Activated T-helper 1 cell treated with anti-CD3 and anti-CD28 coated beads, Interleukin-12 subunit alpha, Interleukin-12 subunit beta, Interleukin-2, Interleukin-4 antibody, amounts not matched to agents 30 ng/mL and 10 ng/mL and 1 ng/mL, durations not matched to agents 14 hours and 24 hours and 36 hours (primary cell): ENCODE measurements at regions of chr4 and their contacts with region 1.

Region 1: GRCh38 chr4:140153718-140154571 is at the start of gene MAML3:
- DNase-seq: peak; percentile 76
- H3K4me3 Mint-ChIP-seq: peak within 1 kb of the TSS; percentile 86
- H3K27ac Mint-ChIP-seq: peak within 1 kb of the TSS; percentile 63
- H3K4me1 Mint-ChIP-seq: peaks cover 57% of the 10 kb centered on the region
- H3K27me3 Mint-ChIP-seq: peaks cover 69% of the 10 kb centered on the region
- total RNA-seq, gene MAML3: 0.32 and 0.47 TPM in 2 replicates

Region 2: DNA sequence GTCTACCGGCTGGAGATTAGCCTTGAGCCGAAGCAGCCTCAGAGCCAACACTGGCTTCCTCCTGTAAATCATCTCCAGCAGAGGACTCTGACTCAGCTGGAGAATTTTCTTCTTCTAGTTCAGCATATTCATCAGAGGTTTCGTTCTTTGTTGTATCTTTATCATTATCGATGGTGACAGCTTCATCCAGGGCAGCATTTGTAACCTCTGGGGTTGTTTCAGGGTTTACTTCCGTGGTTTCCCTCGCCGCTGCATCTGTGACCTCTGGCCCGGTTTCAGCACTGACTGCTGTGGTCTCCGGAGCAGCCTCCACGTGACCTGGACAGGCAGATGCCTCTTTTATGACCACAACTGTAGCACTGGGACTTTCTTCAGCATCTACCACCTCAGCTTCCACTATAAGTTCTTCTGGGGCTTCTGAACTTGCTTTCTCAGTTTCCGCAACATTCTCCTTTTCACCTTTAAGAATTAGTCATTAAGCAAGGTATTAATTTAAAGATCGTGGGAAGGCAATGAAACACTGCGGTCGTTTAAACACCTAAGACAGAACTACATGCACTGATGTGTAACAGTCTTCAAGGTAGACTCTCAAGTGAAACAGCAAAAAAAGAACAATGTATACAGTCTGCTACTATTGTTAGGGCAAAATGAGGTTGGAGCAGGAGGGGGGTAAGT is 887.2 kb before region 1 on chr4:
- intact Hi-C with region 1: loop called (anchors 10 kb)
- DNase-seq: peak; percentile 70
- H3K4me3 Mint-ChIP-seq: peak overlapping the region; percentile 50
- H3K27ac Mint-ChIP-seq: peak overlapping the region; percentile 10
- H3K4me1 Mint-ChIP-seq: peaks cover 21% of the 10 kb centered on the region
- H3K27me3 Mint-ChIP-seq: peaks cover 23% of the 10 kb centered on the region

Region 3: DNA sequence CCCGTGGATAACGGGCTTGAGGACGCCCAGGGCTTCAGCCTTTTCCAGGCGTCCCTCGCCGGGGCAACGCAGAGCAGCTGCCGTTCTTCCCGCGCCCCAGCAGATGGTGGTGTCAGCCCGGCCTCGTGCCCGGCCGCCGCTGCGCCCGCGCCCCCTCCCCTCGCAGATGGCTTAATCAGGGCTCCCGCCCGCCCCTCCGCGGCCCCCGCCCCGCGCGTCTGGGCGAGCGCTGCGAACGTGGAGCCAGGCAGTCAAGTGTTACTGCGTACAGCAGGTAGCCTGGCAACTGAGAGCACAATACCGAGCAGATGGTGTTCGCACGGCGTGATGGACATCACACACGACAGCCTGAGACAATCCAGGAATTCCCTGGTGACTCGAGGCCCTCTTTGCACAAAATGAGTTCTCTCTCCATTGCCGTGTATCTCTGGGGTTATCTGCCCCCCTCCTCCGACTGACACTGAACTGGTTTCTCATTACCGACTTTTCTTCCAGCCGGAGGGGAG is 419.0 kb before region 1 on chr4:
- intact Hi-C with region 1: loop called (anchors 5 kb)
- DNase-seq: peak; percentile 42
- H3K4me3 Mint-ChIP-seq: peak overlapping the region; percentile 66
- H3K27ac Mint-ChIP-seq: no peak overlapping the region
- H3K4me1 Mint-ChIP-seq: peaks cover 6% of the 10 kb centered on the region
- H3K27me3 Mint-ChIP-seq: peaks cover 45% of the 10 kb centered on the region

Region 4: GRCh38 chr4:140049024-140049848 is 104.7 kb before region 1 on chr4:
- intact Hi-C with region 1: loop called (anchors 1 kb)
- DNase-seq: peak; percentile 11
- H3K4me3 Mint-ChIP-seq: peak overlapping the region; percentile 77
- H3K27ac Mint-ChIP-seq: no peak overlapping the region
- H3K4me1 Mint-ChIP-seq: peaks cover 32% of the 10 kb centered on the region
- H3K27me3 Mint-ChIP-seq: peaks cover 59% of the 10 kb centered on the region

Region 5: DNA sequence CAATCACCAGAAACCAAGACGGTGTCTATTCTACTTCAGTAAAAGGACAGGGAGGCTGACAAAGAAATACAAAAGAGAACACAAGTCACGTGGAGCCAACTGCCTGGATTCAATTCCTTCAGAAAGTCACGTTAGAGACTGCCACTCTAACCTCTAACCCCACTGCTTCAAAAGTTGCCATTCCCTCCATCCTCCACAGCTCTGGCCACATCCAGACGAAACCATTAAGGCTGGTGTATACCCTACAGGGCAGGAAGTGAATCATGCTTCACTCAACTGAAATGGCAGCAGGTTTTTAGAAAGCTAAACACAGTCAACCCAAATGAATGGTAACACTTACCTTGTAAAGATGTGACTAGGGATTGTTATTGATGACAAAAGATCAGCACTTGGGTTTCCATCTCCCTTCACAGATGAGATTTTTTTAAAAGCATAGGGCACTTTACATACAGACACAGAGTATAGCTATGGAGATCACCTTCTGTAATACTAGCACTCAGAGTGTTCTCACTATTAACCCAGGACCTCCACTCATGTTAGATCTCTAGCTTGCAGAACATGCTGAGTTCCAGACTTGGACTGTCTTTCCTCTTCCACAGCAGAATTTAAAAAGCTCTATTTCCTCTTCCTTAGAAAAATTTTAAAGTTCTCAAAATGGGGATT is 37.4 kb before region 1 on chr4:
- intact Hi-C with region 1: loop called (anchors 2 kb)
- DNase-seq: peak; percentile 25
- H3K4me3 Mint-ChIP-seq: peak overlapping the region; percentile 21
- H3K27ac Mint-ChIP-seq: peak overlapping the region; percentile 3
- H3K4me1 Mint-ChIP-seq: peaks cover 31% of the 10 kb centered on the region
- H3K27me3 Mint-ChIP-seq: peaks cover 26% of the 10 kb centered on the region

Region 6: DNA sequence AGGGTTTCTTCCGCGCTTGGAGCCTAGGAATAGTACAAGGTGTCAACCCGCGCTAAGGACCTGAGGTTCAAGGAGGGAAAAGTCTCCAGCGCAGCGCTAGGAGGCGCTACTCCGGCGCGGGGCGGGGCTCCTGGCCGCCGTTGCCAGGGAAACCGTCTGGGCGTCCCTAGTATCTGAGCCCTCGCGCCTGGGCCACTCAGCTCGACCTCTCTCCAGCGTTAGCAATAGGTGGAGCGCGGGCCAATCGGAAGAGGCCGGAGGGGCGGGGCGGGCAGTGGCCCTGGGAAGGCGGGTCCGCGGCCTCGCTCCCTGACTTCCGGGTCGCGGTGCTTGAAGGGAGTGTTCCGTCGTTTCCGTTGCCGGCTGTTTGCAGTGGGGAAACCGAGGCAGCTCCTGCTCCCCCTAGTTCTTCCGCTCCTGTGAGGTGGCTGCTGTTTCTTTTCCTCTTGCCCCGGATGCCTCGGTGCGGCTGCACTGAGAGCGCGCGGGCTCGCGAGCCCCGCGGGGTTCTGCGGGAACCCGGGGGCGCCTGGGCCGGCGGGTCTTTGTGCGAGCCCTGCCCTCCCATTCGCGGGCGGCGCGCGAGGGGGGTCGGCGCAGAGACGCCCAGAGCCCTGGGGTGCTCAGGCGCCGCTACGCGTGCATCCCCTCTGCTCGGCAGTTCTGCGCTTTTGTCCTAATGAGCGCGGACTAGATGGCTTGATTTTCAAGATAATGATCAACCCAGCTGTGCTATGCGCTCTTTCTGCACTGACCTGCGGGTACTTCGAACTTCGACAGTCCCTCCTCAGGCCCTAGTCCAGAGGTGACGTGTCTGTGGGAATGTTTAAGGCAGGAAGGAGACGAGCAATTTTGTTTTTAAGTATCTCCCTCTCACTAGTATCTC is 370.2 kb after region 1 on chr4 and contains the start of gene ELMOD2:
- intact Hi-C with region 1: loop called (anchors 5 kb)
- DNase-seq: peak; percentile 97
- H3K4me3 Mint-ChIP-seq: peak within 1 kb of the TSS; percentile 88
- H3K27ac Mint-ChIP-seq: peak within 1 kb of the TSS; percentile 55
- H3K4me1 Mint-ChIP-seq: peaks cover 19% of the 10 kb centered on the region
- H3K27me3 Mint-ChIP-seq: no peaks in the 10 kb centered on the region
- total RNA-seq, gene ELMOD2: 10.8 and 15.7 TPM in 2 replicates

Region 7: GRCh38 chr4:141395246-141395830 is 1241.4 kb after region 1 on chr4:
- intact Hi-C with region 1: no loop called
- DNase-seq: no peak
- H3K4me3 Mint-ChIP-seq: no peak overlapping the region
- H3K27ac Mint-ChIP-seq: no peak overlapping the region
- H3K4me1 Mint-ChIP-seq: no peaks in the 10 kb centered on the region
- H3K27me3 Mint-ChIP-seq: peaks cover 6% of the 10 kb centered on the region